B cell (primary cell): ENCODE measurements at regions of chr2 and their contacts with region 1.

Region 1: DNA sequence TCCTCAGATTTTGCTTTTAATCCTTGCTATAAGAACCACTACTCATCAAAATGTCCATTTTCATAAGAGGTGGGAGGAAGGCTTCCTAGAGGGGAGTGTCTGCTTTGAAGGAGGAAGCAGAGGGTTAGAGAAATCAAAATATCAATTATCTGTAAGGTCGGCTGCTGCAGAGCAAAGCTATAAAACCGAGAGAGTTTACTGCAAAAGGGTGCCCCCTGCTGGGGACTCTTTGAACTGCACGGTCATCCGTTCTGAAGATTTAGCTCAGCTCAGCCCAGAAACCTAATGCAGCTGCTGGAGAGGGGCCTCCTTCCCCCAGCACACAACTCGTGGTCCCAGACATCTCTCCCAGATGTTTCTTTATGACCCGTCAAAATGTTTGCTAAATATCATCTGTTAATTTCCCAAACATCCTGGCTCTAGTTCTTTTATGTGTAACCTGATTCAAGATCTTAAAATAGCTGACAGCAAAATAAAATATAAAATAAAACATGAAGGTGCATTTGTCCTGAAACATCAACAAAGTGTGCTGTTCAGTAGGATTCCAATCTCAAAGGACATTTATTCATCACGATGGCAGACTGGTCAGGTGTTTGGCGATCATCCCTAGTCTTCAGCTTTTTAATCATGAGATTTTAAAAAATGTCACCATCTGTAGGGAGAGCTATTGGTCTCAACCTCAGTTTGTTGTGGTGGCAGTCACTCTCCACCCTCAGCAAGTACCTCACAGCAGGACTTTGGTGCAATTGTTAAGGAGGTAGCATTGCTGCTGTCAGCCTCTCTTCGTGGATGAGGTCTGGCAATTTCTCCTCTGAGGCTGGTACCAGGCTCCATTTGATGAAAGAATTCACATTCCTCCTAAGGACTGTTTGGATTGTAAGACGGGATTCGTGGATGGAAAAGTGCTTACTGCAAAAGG is 185.9 kb downstream of the MTX2 start:
- DNase-seq: peak; percentile 72
- ATAC-seq: peak; percentile 54
- H3K4me3 ChIP-seq: no peak overlapping the region
- H3K4me3 Mint-ChIP-seq: no peak overlapping the region
- H3K27ac ChIP-seq: no peak overlapping the region
- H3K27ac Mint-ChIP-seq: no peak overlapping the region
- H3K4me1 ChIP-seq: no peaks in the 10 kb centered on the region
- H3K4me1 Mint-ChIP-seq: peaks cover 3% of the 10 kb centered on the region
- H3K27me3 ChIP-seq: peaks cover 0 to 6% (median 2%) of the 10 kb centered on the region in 4 experiments
- H3K27me3 Mint-ChIP-seq: peaks cover 33% of the 10 kb centered on the region
- CTCF ChIP-seq: peak; percentile 96

Region 2: DNA sequence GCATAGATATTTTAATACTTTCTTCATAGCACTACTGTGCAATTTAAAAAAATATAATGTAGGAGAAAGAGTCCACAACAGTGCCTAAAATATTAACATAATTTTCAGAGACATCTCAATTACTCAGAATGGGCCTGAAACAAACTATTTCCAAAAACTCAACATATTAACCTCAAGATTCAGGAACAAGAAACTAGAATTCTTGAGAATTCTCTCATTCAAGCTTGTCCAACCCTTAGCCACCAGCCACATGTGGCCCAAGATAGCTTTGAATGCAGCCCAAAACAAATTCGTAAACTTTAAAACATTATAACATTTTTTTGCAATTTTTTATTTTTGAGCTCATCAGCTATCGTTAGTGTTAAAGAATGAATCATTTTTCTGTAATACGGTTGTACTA is 488.3 kb before region 1 on chr2:
- CTCF ChIA-PET with region 1: no interaction called
- POLR2A ChIA-PET with region 1: no interaction called
- intact Hi-C with region 1: no loop called
- DNase-seq: no peak
- ATAC-seq: no peak
- H3K4me3 ChIP-seq: no peak overlapping the region
- H3K4me3 Mint-ChIP-seq: no peak overlapping the region
- H3K27ac ChIP-seq: no peak overlapping the region
- H3K27ac Mint-ChIP-seq: no peak overlapping the region
- H3K4me1 ChIP-seq: no peaks in the 10 kb centered on the region
- H3K4me1 Mint-ChIP-seq: no peaks in the 10 kb centered on the region
- H3K27me3 ChIP-seq: no peaks in the 10 kb centered on the region
- H3K27me3 Mint-ChIP-seq: no peaks in the 10 kb centered on the region
- CTCF ChIP-seq: no peak

Region 3: DNA sequence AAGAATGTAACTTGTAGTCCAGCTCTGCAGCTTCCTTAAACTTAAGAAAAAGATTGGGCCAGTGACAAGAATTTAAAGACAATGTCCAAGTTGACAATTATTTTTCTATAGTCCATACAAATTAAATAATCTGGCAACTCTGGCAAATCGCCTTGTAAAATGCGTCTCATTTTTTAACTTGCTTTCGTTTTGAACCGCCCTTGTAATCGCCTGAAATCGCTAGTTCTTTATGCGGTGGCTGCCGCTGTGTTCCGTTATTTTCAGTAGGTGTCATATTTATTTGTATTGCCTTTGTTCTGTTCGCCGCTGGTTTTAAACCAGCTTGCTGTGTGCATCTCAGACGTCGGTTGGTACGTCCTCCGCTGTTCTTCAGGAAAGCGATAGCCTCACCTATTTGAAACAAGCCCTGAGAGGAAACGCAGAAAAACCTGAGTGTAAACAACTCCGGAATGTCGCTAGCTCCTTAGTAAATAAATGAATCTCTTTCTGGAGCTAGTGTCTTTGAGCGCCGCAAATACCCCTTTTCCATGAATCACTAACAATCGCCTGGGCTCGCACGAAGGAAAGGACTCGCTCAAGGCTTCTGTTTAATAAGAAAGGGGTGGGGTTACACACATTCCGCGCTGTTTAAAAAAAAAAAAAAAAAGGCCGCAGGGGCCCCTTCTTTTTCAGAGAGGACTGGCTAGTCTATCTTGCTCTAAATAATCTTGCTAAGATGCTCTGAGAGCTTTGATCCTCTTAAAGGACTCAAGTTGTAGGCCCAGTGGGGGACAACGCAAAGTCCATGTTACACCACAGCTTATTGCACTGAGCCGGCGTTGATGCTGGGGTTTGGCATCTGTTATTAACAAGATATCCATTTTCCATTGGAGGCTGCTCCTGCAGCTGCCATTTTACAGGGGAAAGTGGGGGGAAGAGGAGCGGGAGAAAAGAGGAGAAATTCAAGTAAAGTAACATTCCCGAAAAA is 322.7 kb before region 1 on chr2:
- CTCF ChIA-PET with region 1: interaction called, 110 read pairs
- POLR2A ChIA-PET with region 1: no interaction called
- intact Hi-C with region 1: no loop called
- DNase-seq: peak; percentile 51
- ATAC-seq: no peak
- H3K4me3 ChIP-seq: peak overlapping the region in 4 of 5 experiments; percentile 2 to 54 (median 18)
- H3K4me3 Mint-ChIP-seq: peak overlapping the region; percentile 84
- H3K27ac ChIP-seq: no peak overlapping the region
- H3K27ac Mint-ChIP-seq: no peak overlapping the region
- H3K4me1 ChIP-seq: peaks cover 33 to 52% of the 10 kb centered on the region in 2 donors
- H3K4me1 Mint-ChIP-seq: peaks cover 36% of the 10 kb centered on the region
- H3K27me3 ChIP-seq: peaks cover 0 to 86% (median 76%) of the 10 kb centered on the region in 4 experiments
- H3K27me3 Mint-ChIP-seq: peaks cover 74% of the 10 kb centered on the region
- CTCF ChIP-seq: no peak

Region 4: GRCh38 chr2:176140513-176141317 is 314.4 kb before region 1 on chr2:
- CTCF ChIA-PET with region 1: interaction called, 10 read pairs
- POLR2A ChIA-PET with region 1: no interaction called
- intact Hi-C with region 1: no loop called
- DNase-seq: peak; percentile 74
- ATAC-seq: peak; percentile 73
- H3K4me3 ChIP-seq: peak overlapping the region in 2 of 5 experiments; percentile 29 to 32
- H3K4me3 Mint-ChIP-seq: peak overlapping the region; percentile 42
- H3K27ac ChIP-seq: no peak overlapping the region
- H3K27ac Mint-ChIP-seq: no peak overlapping the region
- H3K4me1 ChIP-seq: peaks cover 19 to 38% of the 10 kb centered on the region in 2 donors
- H3K4me1 Mint-ChIP-seq: peaks cover 23% of the 10 kb centered on the region
- H3K27me3 ChIP-seq: peaks cover 0 to 90% (median 68%) of the 10 kb centered on the region in 4 experiments
- H3K27me3 Mint-ChIP-seq: peaks cover 76% of the 10 kb centered on the region
- CTCF ChIP-seq: peak; percentile 61

Region 5: DNA sequence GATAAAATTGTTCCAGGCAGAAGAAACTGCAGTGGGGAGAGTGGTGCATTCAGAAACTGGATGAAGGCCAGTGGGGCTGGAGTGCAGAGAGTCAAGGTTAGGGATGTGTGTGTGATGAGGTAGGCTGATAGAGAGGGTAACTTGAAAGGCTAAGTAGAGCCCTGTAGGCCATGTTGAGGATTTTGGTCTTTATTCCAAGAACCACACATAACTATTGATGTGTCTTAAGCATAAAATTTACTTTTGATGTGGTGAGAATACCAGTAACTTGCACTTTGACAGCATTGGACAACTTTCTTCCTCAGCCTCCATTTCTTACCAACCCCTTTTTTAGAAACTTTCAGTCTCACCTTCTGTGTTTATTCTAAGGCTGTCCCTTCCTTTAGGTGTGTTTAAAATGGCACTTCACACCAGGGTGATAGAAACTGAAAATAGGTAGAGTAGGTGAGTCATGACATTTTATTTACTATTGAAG is 163.3 kb before region 1 on chr2:
- CTCF ChIA-PET with region 1: no interaction called
- POLR2A ChIA-PET with region 1: no interaction called
- intact Hi-C with region 1: no loop called
- DNase-seq: no peak
- ATAC-seq: no peak
- H3K4me3 ChIP-seq: no peak overlapping the region
- H3K4me3 Mint-ChIP-seq: no peak overlapping the region
- H3K27ac ChIP-seq: no peak overlapping the region
- H3K27ac Mint-ChIP-seq: no peak overlapping the region
- H3K4me1 ChIP-seq: peaks cover 0 to 7% of the 10 kb centered on the region in 2 donors
- H3K4me1 Mint-ChIP-seq: peaks cover 21% of the 10 kb centered on the region
- H3K27me3 ChIP-seq: no peaks in the 10 kb centered on the region
- H3K27me3 Mint-ChIP-seq: no peaks in the 10 kb centered on the region
- CTCF ChIP-seq: no peak

Region 6: GRCh38 chr2:176473177-176473576 is 18.0 kb after region 1 on chr2:
- CTCF ChIA-PET with region 1: interaction called, 11 read pairs
- POLR2A ChIA-PET with region 1: no interaction called
- intact Hi-C with region 1: no loop called
- DNase-seq: no peak
- ATAC-seq: no peak
- H3K4me3 ChIP-seq: peak overlapping the region in 1 of 5 experiments; percentile 30
- H3K4me3 Mint-ChIP-seq: peak overlapping the region; percentile 59
- H3K27ac ChIP-seq: no peak overlapping the region
- H3K27ac Mint-ChIP-seq: no peak overlapping the region
- H3K4me1 ChIP-seq: peaks cover 10 to 12% of the 10 kb centered on the region in 2 donors
- H3K4me1 Mint-ChIP-seq: peaks cover 19% of the 10 kb centered on the region
- H3K27me3 ChIP-seq: no peaks in the 10 kb centered on the region
- H3K27me3 Mint-ChIP-seq: peaks cover 11% of the 10 kb centered on the region
- CTCF ChIP-seq: no peak

Region 7: DNA sequence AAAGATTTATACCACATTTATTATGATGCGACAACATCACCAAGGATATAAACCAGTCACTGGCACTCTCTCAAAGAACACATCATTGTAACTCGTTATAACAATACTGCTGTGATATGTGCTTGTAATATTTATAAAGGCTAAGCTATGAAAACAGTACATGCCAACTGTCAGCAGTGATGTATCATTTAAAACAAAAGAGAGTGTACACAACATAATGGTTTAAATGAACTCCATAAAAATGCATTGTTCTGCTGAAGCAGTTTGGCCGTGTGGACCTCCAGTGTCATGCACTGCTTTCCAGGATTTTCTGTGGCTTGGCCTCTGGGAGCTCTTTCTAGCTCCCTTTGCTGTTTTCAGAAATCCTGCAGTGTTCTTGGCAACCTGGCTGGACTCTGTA is 29.7 kb after region 1 on chr2:
- CTCF ChIA-PET with region 1: interaction called, 15 read pairs
- POLR2A ChIA-PET with region 1: no interaction called
- intact Hi-C with region 1: no loop called
- DNase-seq: no peak
- ATAC-seq: no peak
- H3K4me3 ChIP-seq: no peak overlapping the region
- H3K4me3 Mint-ChIP-seq: no peak overlapping the region
- H3K27ac ChIP-seq: no peak overlapping the region
- H3K27ac Mint-ChIP-seq: no peak overlapping the region
- H3K4me1 ChIP-seq: no peaks in the 10 kb centered on the region
- H3K4me1 Mint-ChIP-seq: no peaks in the 10 kb centered on the region
- H3K27me3 ChIP-seq: peaks cover 0 to 9% (median 3%) of the 10 kb centered on the region in 4 experiments
- H3K27me3 Mint-ChIP-seq: peaks cover 34% of the 10 kb centered on the region
- CTCF ChIP-seq: no peak

Region 8: DNA sequence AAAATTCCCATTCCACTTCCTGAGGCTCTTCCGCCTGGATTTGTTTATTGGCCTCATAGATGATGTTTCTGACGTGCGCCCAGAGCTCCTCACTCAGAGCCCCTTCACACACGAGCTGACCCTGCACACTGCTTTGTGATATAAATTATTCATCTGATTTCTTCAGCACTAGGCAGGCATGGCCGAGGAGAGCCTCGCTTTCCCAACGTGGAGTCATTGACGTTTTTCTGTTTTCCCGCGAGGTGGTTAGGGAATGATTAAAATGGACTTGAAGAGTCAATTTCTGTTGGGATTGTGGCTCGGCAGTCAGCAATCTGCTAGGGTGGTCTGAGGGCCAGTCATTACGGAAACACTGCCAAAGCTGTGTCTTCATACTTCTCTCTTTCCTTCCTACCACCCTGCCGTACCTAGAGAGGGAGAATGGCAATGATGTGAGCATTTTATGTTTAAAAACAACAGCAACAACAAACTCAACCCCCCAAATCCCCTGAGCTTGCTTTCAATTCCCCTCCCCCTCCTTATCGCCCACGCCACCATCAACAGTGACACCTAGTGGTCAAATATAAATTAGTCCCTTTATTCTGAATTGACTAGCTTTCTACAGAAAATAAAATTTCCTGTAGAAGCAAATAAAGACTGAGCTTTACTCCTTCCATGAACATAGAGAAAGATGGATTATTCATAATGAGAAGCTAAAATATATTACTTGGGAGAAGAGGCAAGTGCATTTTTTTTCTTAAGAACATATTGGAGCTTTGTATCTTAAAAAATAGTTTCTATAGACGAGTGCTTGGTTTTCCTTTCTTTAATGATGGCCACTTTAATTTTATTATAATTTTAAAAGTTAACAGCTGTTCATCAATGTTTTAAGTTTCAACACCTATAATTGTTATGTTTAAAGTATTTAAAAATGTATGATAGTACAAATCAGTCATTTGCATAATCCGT is 99.2 kb after region 1 on chr2:
- CTCF ChIA-PET with region 1: interaction called, 26 read pairs
- POLR2A ChIA-PET with region 1: no interaction called
- intact Hi-C with region 1: loop called (anchors 5 kb)
- DNase-seq: peak; percentile 72
- ATAC-seq: peak; percentile 57
- H3K4me3 ChIP-seq: peak overlapping the region; percentile 25 to 60 (median 52)
- H3K4me3 Mint-ChIP-seq: peak overlapping the region; percentile 74
- H3K27ac ChIP-seq: no peak overlapping the region
- H3K27ac Mint-ChIP-seq: no peak overlapping the region
- H3K4me1 ChIP-seq: peaks cover 10 to 11% of the 10 kb centered on the region in 2 donors
- H3K4me1 Mint-ChIP-seq: peaks cover 10% of the 10 kb centered on the region
- H3K27me3 ChIP-seq: peaks cover 0 to 22% (median 14%) of the 10 kb centered on the region in 4 experiments
- H3K27me3 Mint-ChIP-seq: peaks cover 49% of the 10 kb centered on the region
- CTCF ChIP-seq: peak; percentile 76